Activated CD8-positive, alpha-beta T cell treated with anti-CD3 and anti-CD28 coated beads for 36 hours (primary cell): ENCODE measurements at regions of chr3 and their contacts with region 1.

Region 1: DNA sequence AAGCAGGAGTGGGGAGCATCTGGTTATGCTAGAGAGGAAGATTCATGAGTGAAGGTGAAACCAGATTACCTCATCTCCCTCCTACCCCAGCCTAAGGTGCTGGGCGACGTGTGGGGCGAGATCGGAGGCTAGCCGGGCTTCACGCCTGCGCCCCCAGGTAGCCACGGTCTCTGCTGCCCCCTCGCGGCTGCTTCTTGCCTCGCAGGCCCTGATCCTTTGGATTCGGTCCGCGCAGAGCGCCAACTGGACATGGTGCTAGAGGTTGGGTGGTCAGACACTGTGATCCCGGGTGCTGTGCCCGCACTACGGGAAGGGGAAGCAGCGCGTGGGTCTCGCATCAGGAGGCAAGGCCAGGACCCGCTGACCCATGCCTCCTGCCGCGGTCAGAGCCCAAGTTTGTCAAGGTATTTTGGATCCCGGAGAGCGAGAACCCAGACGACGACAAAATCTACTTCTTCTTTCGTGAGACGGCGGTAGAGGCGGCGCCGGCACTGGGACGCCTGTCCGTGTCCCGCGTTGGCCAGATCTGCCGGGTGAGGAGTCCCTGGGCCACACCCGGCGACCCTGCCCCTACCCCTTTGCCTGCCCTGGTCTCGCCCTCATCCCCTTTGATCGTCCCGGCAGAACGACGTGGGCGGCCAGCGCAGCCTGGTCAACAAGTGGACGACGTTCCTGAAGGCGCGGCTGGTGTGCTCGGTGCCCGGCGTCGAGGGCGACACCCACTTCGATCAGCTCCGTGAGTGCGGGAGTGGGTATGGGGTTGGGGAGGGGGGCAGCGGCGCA is 4.2 kb downstream of the SEMA3B start:
- DNase-seq: peak; percentile 94
- ATAC-seq: peak; percentile 88
- H3K4me3 Mint-ChIP-seq: peak overlapping the region; percentile 74
- H3K27ac Mint-ChIP-seq: peak overlapping the region; percentile 26
- H3K4me1 Mint-ChIP-seq: peaks cover 33% of the 10 kb centered on the region
- H3K27me3 Mint-ChIP-seq: peaks cover 39% of the 10 kb centered on the region
- CTCF ChIP-seq: peak; percentile 96

Region 2: DNA sequence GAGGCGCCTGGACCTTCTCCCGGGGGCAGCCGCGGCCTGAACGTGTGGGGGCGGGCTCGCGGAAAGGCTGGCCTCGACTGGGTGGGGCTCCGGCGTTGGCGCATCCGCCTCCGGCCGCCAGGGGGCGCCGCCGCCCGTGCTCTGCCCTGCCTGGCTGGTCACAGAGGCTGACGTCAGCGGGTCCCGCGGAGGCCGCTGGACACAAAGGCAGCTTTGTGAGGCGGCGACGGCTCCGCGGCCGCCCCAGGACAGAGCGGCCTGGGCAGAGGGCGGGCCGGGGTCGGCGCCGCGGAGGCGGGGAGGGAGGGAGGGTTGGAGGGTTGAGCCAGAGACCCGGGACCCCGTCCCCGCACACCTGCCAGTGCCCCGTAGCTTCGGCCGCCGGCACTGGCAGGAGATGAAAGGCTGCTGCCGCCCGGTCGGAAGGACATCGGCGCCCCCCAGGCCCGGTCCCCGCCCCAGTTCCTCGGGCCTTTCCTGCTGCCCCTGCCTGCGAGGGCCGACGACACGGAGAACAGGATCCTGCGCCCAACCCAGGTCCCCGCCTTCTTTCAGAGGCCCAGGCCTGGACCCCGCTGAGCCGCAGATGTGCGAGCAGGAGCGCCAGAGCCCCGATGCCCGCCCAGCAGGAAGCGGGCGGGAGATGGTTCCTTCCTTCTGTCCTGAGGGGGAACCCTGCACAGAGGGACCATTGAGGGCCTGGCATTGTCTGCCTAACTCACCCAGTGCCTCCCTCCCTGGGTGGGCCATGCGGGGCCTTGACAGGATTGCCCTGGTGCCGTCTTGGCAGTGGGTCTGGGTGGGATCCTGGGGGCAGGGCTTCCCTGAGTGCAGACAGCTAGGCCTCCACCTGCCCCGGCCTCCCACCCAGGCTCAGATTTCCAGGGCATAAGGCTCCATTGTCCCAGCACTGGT is 12.8 kb before region 1 on chr3:
- CTCF ChIA-PET with region 1: interaction called, 18 read pairs
- POLR2A ChIA-PET with region 1: interaction called, 4 read pairs
- intact Hi-C with region 1: no loop called
- DNase-seq: peak; percentile 91
- ATAC-seq: peak; percentile 90
- H3K4me3 Mint-ChIP-seq: peak overlapping the region; percentile 61
- H3K27ac Mint-ChIP-seq: peak overlapping the region; percentile 78
- H3K4me1 Mint-ChIP-seq: peaks cover 4% of the 10 kb centered on the region
- H3K27me3 Mint-ChIP-seq: no peaks in the 10 kb centered on the region
- CTCF ChIP-seq: peak; percentile 99

Region 3: GRCh38 chr3:50292159-50293078 is 19.3 kb after region 1 on chr3 and contains the start of gene IFRD2:
- CTCF ChIA-PET with region 1: interaction called, 13 read pairs
- POLR2A ChIA-PET with region 1: interaction called, 98 read pairs
- intact Hi-C with region 1: no loop called
- DNase-seq: peak; percentile 98
- ATAC-seq: peak; percentile 98
- H3K4me3 Mint-ChIP-seq: peak within 1 kb of the TSS; percentile 95
- H3K27ac Mint-ChIP-seq: peak within 1 kb of the TSS; percentile 93
- H3K4me1 Mint-ChIP-seq: peaks cover 14% of the 10 kb centered on the region
- H3K27me3 Mint-ChIP-seq: no peaks in the 10 kb centered on the region
- CTCF ChIP-seq: no peak
- total RNA-seq, gene IFRD2: 132 to 133 TPM